T-cell (primary cell): ENCODE measurements at regions of chr2 and their contacts with region 1.

Region 1: GRCh38 chr2:113138428-113139322 is 11.3 kb downstream of the IL1RN start:
- DNase-seq: peak in 26 of 35 experiments; percentile 9 to 92 (median 43)
- ATAC-seq: peak; percentile 69 to 88 (median 76)
- H3K4me3 ChIP-seq: peak overlapping the region in 1 of 2 donors; percentile 30
- H3K4me3 Mint-ChIP-seq: peak overlapping the region; percentile 54 to 60 (median 54)
- H3K27ac ChIP-seq: peak overlapping the region; percentile 41
- H3K27ac Mint-ChIP-seq: peak overlapping the region; percentile 71 to 86
- H3K4me1 ChIP-seq: peaks cover 7 to 14% of the 10 kb centered on the region in 2 experiments
- H3K4me1 Mint-ChIP-seq: peaks cover 18 to 27% (median 18%) of the 10 kb centered on the region in 3 donors
- H3K27me3 ChIP-seq: no peaks in the 10 kb centered on the region
- H3K27me3 Mint-ChIP-seq: no peaks in the 10 kb centered on the region

Region 2: GRCh38 chr2:113157118-113157896 is 18.6 kb after region 1 on chr2:
- CTCF ChIA-PET with region 1: interaction called, 8 to 12 read pairs
- POLR2A ChIA-PET with region 1: no interaction called
- DNase-seq: peak in 13 of 35 experiments; percentile 29 to 65 (median 45)
- ATAC-seq: peak; percentile 85 to 90 (median 88)
- H3K4me3 ChIP-seq: peak overlapping the region; percentile 70 to 74
- H3K4me3 Mint-ChIP-seq: peak overlapping the region; percentile 81 to 89 (median 89)
- H3K27ac ChIP-seq: peak overlapping the region; percentile 22
- H3K27ac Mint-ChIP-seq: peak overlapping the region; percentile 82 to 88
- H3K4me1 ChIP-seq: peaks cover 12 to 13% of the 10 kb centered on the region in 2 experiments
- H3K4me1 Mint-ChIP-seq: peaks cover 24 to 26% (median 26%) of the 10 kb centered on the region in 3 donors
- H3K27me3 ChIP-seq: no peaks in the 10 kb centered on the region
- H3K27me3 Mint-ChIP-seq: no peaks in the 10 kb centered on the region

Region 3: GRCh38 chr2:113173542-113174395 is 35.1 kb after region 1 on chr2 and contains the start of gene PSD4:
- CTCF ChIA-PET with region 1: interaction called, 16 to 99 read pairs
- POLR2A ChIA-PET with region 1: interaction called, 3 to 10 read pairs
- DNase-seq: peak; percentile 75 to 93 (median 88)
- ATAC-seq: peak; percentile 82 to 91 (median 86)
- H3K4me3 ChIP-seq: peak within 1 kb of the TSS; percentile 90 to 93
- H3K4me3 Mint-ChIP-seq: peak within 1 kb of the TSS; percentile 85 to 86 (median 86)
- H3K27ac ChIP-seq: peak within 1 kb of the TSS; percentile 78
- H3K27ac Mint-ChIP-seq: peak within 1 kb of the TSS; percentile 90 to 96
- H3K4me1 ChIP-seq: peaks cover 54 to 95% of the 10 kb centered on the region in 2 experiments
- H3K4me1 Mint-ChIP-seq: peaks cover 82 to 84% (median 83%) of the 10 kb centered on the region in 3 donors
- H3K27me3 ChIP-seq: no peaks in the 10 kb centered on the region
- H3K27me3 Mint-ChIP-seq: peaks cover 0 to 2% of the 10 kb centered on the region in 2 donors
- total RNA-seq, gene PSD4: 145 to 217 (median 150) TPM

Region 4: GRCh38 chr2:113198790-113199612 is 60.3 kb after region 1 on chr2:
- CTCF ChIA-PET with region 1: interaction called, 34 to 73 read pairs
- POLR2A ChIA-PET with region 1: interaction called in 1 of 2 experiments, 3 read pairs
- DNase-seq: peak; percentile 15 to 81 (median 66)
- ATAC-seq: peak; percentile 70 to 86 (median 80)
- H3K4me3 ChIP-seq: no peak overlapping the region
- H3K4me3 Mint-ChIP-seq: peak overlapping the region in 1 of 3 donors; percentile 28
- H3K27ac ChIP-seq: no peak overlapping the region
- H3K27ac Mint-ChIP-seq: peak overlapping the region in 1 of 2 donors; percentile 59
- H3K4me1 ChIP-seq: peaks cover 0 to 20% of the 10 kb centered on the region in 2 experiments
- H3K4me1 Mint-ChIP-seq: peaks cover 7 to 39% (median 24%) of the 10 kb centered on the region in 3 donors
- H3K27me3 ChIP-seq: no peaks in the 10 kb centered on the region
- H3K27me3 Mint-ChIP-seq: no peaks in the 10 kb centered on the region

Region 5: DNA sequence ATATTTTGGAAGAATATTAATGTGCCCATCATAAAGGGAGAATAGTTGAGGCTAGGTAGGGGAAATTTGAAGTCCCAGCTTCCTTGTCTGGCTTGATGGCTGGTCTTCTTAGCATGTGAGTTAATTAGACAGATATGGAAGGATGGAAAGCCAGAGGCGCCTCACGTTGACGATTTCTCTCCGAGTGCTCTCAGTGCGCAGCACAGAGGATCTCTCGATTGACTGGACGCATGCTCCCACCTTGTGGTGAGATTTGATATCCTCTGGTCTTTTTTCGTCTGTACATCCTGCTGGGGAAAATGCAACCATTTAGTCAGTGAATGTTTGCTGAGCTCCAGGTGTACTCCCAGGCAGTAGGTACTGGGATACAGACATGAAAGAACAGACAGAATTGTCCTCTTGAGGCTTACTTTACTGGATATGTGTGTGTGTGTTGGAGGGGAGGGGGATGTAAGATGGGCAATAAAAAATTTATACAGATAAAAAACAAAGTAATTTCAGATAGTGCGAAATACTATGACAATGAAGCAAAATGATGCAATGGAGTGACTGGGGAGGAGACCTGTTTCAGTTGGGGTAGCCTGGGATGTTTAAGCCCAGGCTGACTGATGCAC is 231.9 kb after region 1 on chr2:
- CTCF ChIA-PET with region 1: interaction called in 1 of 2 experiments, 23 read pairs
- POLR2A ChIA-PET with region 1: no interaction called
- DNase-seq: peak; percentile 40 to 79 (median 59)
- ATAC-seq: peak; percentile 89 to 97 (median 94)
- H3K4me3 ChIP-seq: no peak overlapping the region
- H3K4me3 Mint-ChIP-seq: no peak overlapping the region
- H3K27ac ChIP-seq: no peak overlapping the region
- H3K27ac Mint-ChIP-seq: peak overlapping the region in 1 of 2 donors; percentile 64
- H3K4me1 ChIP-seq: peaks cover 0 to 3% of the 10 kb centered on the region in 2 experiments
- H3K4me1 Mint-ChIP-seq: peaks cover 5 to 8% (median 6%) of the 10 kb centered on the region in 3 donors
- H3K27me3 ChIP-seq: no peaks in the 10 kb centered on the region
- H3K27me3 Mint-ChIP-seq: peaks cover 0 to 2% of the 10 kb centered on the region in 2 donors